Mammary epithelial cell (primary cell): ENCODE measurements at regions of chr3 and their contacts with region 1.

Region 1: GRCh38 chr3:33211444-33211843 is 7.2 kb downstream of the SUSD5 start:
- DNase-seq: peak; percentile 82
- H3K4me3 ChIP-seq: no peak overlapping the region
- H3K27ac ChIP-seq: no peak overlapping the region
- H3K4me1 ChIP-seq: peaks cover 8% of the 10 kb centered on the region
- H3K27me3 ChIP-seq: no peaks in the 10 kb centered on the region
- CTCF ChIP-seq: no peak

Region 2: DNA sequence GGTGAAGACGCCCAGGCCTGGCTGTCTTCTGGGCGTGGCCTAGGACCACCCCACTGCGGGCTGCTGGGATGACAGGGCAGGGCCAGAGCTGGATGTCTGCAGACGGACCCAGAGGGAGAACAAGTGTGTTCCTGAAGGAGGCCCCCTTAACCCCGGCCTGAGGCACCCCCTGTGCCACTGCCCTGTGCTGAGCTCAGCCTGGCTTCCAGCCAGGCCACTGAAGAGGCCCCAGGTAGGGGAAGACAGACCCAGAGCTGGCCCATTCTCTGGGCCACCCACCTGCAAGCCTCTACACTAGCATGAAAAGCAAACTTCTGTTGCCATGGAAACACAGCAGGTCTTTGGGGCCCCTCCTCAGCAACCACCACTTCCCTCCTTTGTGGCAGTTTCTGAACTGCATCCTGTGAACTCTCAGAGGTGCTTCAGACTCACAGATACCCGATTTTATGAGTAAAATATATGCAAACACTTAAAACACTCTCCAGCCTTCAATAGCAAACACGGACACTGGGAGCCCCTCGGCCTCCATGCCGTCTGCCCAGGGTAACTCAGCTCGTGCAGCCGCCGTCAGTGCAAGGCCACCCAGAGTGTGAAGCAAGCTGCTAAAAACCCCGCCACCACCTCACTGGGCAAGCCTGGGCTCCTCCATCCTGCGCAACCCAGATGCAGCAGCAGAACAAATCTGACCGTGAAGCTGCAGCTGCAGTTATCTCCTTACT is 751.3 kb before region 1 on chr3:
- CTCF ChIA-PET with region 1: interaction called, 10 read pairs
- dilution Hi-C with region 1: no loop called
- in situ Hi-C with region 1: no loop called
- intact Hi-C with region 1: no loop called
- DNase-seq: no peak
- H3K4me3 ChIP-seq: no peak overlapping the region
- H3K27ac ChIP-seq: no peak overlapping the region
- H3K4me1 ChIP-seq: peaks cover 35% of the 10 kb centered on the region
- H3K27me3 ChIP-seq: no peaks in the 10 kb centered on the region
- CTCF ChIP-seq: no peak

Region 3: GRCh38 chr3:32848215-32848614 is 363.2 kb before region 1 on chr3:
- CTCF ChIA-PET with region 1: no interaction called
- dilution Hi-C with region 1: no loop called
- in situ Hi-C with region 1: no loop called
- intact Hi-C with region 1: no loop called
- DNase-seq: no peak
- H3K4me3 ChIP-seq: no peak overlapping the region
- H3K27ac ChIP-seq: no peak overlapping the region
- H3K4me1 ChIP-seq: no peaks in the 10 kb centered on the region
- H3K27me3 ChIP-seq: peaks cover 3% of the 10 kb centered on the region
- CTCF ChIP-seq: no peak

Region 4: DNA sequence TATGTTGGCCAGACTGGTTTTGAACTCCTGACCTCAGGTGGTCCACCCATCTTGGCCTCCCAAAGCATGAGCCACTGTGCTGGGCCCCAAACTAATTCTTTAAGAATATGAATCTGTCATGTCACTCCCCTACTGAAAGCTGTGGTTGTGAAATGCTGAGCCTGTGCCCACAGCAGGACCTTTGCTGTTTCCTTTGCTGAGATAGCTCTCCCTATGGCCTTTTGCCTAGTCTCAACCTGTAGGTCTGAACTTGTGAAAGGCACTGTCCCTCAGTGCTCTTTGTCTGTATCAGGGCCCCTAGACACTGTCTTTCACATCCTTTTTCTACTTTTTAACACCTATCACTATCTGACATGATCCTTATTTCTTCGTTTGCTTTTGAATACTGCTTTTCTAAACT is 322.7 kb before region 1 on chr3:
- CTCF ChIA-PET with region 1: no interaction called
- dilution Hi-C with region 1: no loop called
- in situ Hi-C with region 1: no loop called
- intact Hi-C with region 1: no loop called
- DNase-seq: no peak
- H3K4me3 ChIP-seq: no peak overlapping the region
- H3K27ac ChIP-seq: no peak overlapping the region
- H3K4me1 ChIP-seq: no peaks in the 10 kb centered on the region
- H3K27me3 ChIP-seq: peaks cover 3% of the 10 kb centered on the region
- CTCF ChIP-seq: no peak

Region 5: DNA sequence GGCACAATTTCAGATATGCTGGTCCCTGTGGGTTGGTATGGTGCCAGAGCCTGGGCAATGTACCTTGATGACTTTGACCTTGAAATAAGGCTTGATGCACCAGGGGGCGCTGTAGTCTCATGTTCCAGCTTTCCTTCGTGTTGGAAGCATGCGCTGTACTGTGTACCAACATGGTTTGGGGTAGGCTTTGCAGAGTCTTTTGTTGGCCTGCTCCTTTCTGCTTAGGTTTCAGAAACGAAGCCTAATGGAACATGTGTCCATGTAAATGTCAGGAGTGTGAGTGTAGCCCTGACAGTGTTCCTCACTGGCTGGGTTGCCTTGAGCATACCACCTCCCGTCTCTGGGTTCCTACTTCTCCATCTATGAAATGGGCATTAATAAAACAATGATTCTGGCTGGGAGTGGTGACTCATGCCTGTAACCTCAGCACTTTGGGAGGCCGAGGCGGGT is 263.6 kb before region 1 on chr3:
- CTCF ChIA-PET with region 1: no interaction called
- dilution Hi-C with region 1: no loop called
- in situ Hi-C with region 1: no loop called
- intact Hi-C with region 1: no loop called
- DNase-seq: peak; percentile 76
- H3K4me3 ChIP-seq: no peak overlapping the region
- H3K27ac ChIP-seq: no peak overlapping the region
- H3K4me1 ChIP-seq: no peaks in the 10 kb centered on the region
- H3K27me3 ChIP-seq: no peaks in the 10 kb centered on the region
- CTCF ChIP-seq: peak; percentile 73 to 87

Region 6: DNA sequence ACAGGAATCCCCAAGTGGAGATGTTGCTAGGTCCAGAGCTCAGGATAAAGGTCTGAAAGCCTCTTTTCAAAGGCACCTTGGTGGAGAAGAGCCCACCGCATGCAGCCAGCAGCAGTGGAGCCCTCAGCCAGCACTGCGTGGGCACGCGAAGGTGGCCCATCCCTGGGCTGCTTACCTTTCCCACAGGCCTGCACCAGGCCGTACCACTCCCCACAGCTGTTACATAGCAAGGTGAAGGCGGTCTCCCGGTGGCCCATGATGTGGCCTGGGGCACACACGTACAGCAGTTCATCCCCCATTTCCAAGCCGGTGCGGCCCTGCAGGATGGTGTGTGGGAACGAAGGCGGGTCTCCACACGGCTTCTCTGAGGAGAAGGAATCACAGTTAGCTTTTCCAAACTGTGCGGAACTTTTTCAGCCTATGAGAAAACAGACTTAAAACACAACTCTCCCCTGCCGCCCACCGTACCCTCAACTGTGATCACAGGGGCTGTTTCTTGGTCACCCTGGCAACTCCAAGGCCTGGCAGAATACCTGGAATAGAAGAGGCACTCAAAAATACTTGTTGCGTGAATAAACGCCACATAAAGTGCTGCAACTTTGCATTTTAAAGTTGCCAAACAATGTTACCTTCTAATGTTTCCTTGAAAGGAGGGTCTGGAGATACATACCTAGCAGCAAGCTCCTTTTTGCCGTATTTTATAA is 36.6 kb before region 1 on chr3:
- CTCF ChIA-PET with region 1: interaction called, 11 read pairs
- dilution Hi-C with region 1: no loop called
- in situ Hi-C with region 1: no loop called
- intact Hi-C with region 1: no loop called
- DNase-seq: no peak
- H3K4me3 ChIP-seq: no peak overlapping the region
- H3K27ac ChIP-seq: no peak overlapping the region
- H3K4me1 ChIP-seq: no peaks in the 10 kb centered on the region
- H3K27me3 ChIP-seq: no peaks in the 10 kb centered on the region
- CTCF ChIP-seq: no peak